ENCODE measurements at regions of chr5 and their contacts with region 1.

Region 1: DNA sequence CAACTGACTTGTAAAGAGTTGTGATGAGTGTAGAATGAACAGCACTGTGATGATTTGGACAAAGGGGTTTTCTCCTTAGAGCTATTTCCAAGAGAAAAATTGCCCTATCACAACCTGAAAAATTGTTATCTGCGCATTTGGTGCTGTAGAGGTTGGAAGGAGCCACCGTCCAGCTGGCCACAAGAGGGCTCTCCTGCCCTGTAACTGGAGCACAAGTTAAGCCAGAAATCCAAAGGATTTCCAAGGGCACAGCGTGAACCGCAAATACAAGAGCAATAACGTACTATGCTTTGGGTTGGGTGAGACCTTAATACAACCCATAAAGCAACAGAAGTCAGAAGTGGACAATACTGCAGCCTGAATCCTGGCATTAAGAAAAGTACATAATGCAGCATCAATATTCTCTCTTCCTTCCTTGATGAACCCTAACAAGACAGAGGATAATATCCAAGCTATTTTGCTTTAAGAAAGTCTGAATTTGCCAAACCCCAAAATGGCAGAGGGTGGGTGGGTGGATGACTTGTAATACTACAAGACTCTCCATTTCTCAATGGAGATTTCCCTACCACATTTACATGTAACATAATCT is 56.8 kb upstream of the SMIM32 start:
- DNase-seq: peak; percentile 57
- H3K4me3 ChIP-seq: no peak overlapping the region
- H3K27ac ChIP-seq: no peak overlapping the region
- H3K4me1 ChIP-seq: no peaks in the 10 kb centered on the region
- H3K27me3 ChIP-seq: no peaks in the 10 kb centered on the region
- CTCF ChIP-seq: peak; percentile 33 to 76 (median 66)
- POLR2A ChIP-seq: no peak

Region 2: GRCh38 chr5:136769900-136770684 is 520.3 kb after region 1 on chr5:
- intact Hi-C with region 1: loop called (anchors 5 kb)
- DNase-seq: peak; percentile 68
- H3K4me3 ChIP-seq: no peak overlapping the region
- H3K27ac ChIP-seq: no peak overlapping the region
- H3K4me1 ChIP-seq: no peaks in the 10 kb centered on the region
- H3K27me3 ChIP-seq: no peaks in the 10 kb centered on the region
- CTCF ChIP-seq: peak; percentile 38 to 86 (median 72)
- POLR2A ChIP-seq: no peak